ENCODE measurements at regions of chr9 and their contacts with region 1.

Region 1: DNA sequence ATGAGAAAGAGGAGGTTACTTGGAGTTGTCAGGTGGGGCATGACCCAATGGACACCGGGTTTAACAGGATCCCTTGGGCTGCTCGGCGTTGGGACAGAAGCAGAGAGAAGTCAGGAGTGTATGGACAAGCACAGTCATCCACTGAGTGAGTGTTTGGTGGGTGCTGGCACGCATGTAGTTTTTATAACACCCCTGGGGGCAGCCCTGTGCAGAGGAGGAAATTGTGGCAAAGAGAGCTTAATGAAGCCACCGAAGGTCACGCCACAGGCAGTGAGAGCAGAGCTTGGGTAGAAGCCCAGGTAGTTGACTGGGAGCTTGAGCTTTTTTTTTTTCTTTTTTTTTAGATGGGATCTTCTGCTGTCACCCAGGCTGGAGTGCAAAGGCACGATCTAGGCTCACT is 43.2 kb upstream of the IER5L start:
- DNase-seq: peak; percentile 51
- H3K4me3 Mint-ChIP-seq: no peak overlapping the region
- H3K27ac Mint-ChIP-seq: no peak overlapping the region
- H3K4me1 Mint-ChIP-seq: peaks cover 43% of the 10 kb centered on the region
- H3K27me3 Mint-ChIP-seq: peaks cover 3% of the 10 kb centered on the region

Region 2: DNA sequence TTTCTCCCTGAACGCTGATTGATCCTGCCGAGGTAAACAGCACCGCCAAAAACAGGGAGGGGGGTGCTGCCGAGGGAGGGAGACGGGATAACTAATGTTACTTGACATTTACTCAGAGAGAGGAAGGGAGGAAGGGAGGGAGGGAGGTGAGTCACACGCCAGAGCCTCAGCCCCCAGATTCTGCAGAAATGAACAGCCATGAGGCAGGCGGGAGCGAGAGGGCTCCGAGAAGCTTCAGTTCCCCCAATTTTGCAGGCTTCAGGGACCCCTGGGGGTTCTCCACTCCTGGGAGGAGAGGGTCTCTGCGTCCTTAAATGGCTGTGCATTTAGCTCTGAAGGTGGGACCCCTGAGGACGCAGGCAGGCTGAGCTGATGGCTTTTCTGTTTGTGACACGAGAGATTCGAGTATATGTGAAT is 16.0 kb after region 1 on chr9:
- CTCF ChIA-PET with region 1: interaction called, 12 read pairs
- POLR2A ChIA-PET with region 1: interaction called, 7 read pairs
- DNase-seq: peak; percentile 43
- H3K4me3 Mint-ChIP-seq: peak overlapping the region; percentile 60
- H3K27ac Mint-ChIP-seq: peak overlapping the region; percentile 70
- H3K4me1 Mint-ChIP-seq: peaks cover 51% of the 10 kb centered on the region
- H3K27me3 Mint-ChIP-seq: no peaks in the 10 kb centered on the region